Activated B cell treated with CpG ODN at 0.5 μM for 24 hours (primary cell): ENCODE measurements at regions of chr16 and their contacts with region 1.

Region 1: DNA sequence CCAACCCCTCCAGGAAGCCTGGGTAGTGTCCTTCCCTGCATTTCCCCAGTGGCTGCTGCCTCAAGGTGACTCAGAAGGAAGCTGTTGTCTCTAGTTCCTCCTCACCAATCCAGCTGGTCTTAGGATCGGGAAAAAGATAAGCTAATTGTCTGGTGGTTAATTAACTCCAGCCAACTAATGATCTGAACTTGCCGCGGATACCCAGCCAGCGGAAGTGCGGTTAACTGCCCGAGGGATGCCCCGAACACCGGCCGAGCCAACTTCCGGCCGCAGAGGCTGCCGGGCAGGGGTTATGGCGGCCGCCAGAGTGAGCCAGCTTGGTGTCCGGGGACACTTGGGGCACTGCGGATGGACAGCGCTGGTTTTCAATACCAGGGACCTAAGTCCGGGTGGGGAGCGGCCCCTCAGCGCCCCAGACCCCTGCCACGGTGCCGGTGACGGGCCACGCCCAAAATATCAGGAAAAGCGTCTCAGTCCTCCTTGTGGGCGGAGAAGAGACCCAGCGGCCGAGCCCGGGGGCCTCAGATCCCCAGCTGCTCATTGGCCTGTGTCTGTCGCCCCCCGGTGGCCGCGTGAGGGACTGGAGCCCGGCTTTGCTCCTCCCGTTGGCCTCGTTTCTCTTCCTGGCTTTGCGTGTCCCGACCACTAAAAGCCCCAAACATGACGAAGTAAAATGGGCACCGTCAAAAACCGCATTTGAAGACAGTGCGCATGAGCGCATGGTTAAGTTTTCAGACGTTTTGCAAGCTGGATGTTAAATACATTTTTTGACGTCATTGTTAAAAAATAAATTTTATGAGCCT is 10.2 kb upstream of the PRSS22 start:
- DNase-seq: peak; percentile 92
- ATAC-seq: peak; percentile 96
- H3K4me3 Mint-ChIP-seq: peak overlapping the region; percentile 93
- H3K27ac Mint-ChIP-seq: peak overlapping the region; percentile 92
- H3K4me1 Mint-ChIP-seq: peaks cover 7% of the 10 kb centered on the region
- H3K27me3 Mint-ChIP-seq: peaks cover 11% of the 10 kb centered on the region
- CTCF ChIP-seq: peak; percentile 31

Region 2: DNA sequence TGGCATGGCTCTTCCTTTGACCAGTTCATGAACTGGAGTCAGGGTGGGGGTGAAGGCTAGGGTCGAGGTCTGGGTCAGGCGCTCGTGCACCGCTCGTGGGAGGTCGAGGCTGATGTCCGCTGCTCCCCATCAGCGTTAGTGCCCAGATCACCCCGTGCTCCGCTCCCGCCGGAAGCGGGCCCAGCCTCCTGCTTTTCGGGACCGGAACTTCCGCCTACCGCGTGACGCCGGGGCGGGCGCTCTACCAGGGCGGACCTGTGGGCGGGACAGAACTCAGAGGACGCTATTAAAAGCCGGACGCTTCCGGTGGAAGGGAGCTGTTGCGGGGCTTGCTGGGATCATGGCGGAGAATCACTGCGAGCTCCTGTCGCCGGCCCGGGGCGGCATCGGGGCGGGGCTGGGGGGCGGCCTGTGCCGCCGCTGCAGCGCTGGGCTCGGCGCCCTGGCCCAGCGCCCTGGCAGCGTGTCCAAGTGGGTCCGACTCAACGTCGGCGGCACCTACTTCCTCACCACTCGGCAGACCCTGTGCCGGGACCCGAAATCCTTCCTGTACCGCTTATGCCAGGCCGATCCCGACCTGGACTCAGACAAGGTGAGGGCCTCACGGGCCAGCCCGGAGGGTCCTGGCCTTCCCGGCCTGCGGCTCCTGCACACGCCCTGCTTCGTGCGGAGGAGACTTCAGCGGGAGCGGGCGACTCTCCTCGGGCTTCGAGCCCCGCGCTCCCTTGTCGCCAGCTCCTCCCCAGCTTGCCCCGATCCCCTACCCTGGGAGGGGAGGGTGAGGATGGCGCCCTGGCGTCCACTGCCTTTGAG is 185.8 kb before region 1 on chr16 and contains the start of gene KCTD5:
- CTCF ChIA-PET with region 1: interaction called, 3 read pairs
- POLR2A ChIA-PET with region 1: interaction called, 11 read pairs
- intact Hi-C with region 1: no loop called
- DNase-seq: peak; percentile 93
- ATAC-seq: peak; percentile 85
- H3K4me3 Mint-ChIP-seq: peak within 1 kb of the TSS; percentile 96
- H3K27ac Mint-ChIP-seq: peak within 1 kb of the TSS; percentile 92
- H3K4me1 Mint-ChIP-seq: peaks cover 31% of the 10 kb centered on the region
- H3K27me3 Mint-ChIP-seq: no peaks in the 10 kb centered on the region
- CTCF ChIP-seq: no peak
- total RNA-seq, gene KCTD5: 30.3 and 31.4 TPM in 2 replicates

Region 3: GRCh38 chr16:2838928-2839327 is 29.3 kb before region 1 on chr16:
- CTCF ChIA-PET with region 1: interaction called, 7 read pairs
- POLR2A ChIA-PET with region 1: no interaction called
- intact Hi-C with region 1: loop called (anchors 1 kb)
- DNase-seq: no peak
- ATAC-seq: peak; percentile 54
- H3K4me3 Mint-ChIP-seq: no peak overlapping the region
- H3K27ac Mint-ChIP-seq: no peak overlapping the region
- H3K4me1 Mint-ChIP-seq: peaks cover 15% of the 10 kb centered on the region
- H3K27me3 Mint-ChIP-seq: peaks cover 28% of the 10 kb centered on the region
- CTCF ChIP-seq: no peak

Region 4: DNA sequence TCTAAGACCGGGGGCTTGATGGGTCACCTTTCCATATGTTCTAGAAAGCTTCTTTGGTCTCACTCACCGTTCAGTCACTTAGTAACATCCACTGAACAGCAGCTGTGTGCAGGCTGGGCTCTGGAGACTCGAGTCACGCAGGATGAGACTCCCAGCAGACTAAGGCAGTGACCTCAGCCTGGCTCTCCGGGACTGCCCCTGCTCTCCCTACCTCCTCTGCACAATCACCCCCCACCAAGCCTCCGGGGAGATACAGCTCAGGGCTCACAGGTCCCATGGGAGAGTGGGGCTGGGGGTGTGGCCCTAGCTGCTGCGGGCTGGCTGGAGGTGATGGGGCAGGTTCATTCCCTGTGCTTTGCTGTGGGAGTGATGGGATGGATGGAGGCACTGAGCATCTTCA is 28.9 kb after region 1 on chr16:
- CTCF ChIA-PET with region 1: interaction called, 6 read pairs
- POLR2A ChIA-PET with region 1: interaction called, 10 read pairs
- intact Hi-C with region 1: loop called (anchors 1 kb)
- DNase-seq: peak; percentile 82
- ATAC-seq: peak; percentile 100
- H3K4me3 Mint-ChIP-seq: peak overlapping the region; percentile 55
- H3K27ac Mint-ChIP-seq: peak overlapping the region; percentile 69
- H3K4me1 Mint-ChIP-seq: peaks cover 17% of the 10 kb centered on the region
- H3K27me3 Mint-ChIP-seq: no peaks in the 10 kb centered on the region
- CTCF ChIP-seq: no peak

Region 5: DNA sequence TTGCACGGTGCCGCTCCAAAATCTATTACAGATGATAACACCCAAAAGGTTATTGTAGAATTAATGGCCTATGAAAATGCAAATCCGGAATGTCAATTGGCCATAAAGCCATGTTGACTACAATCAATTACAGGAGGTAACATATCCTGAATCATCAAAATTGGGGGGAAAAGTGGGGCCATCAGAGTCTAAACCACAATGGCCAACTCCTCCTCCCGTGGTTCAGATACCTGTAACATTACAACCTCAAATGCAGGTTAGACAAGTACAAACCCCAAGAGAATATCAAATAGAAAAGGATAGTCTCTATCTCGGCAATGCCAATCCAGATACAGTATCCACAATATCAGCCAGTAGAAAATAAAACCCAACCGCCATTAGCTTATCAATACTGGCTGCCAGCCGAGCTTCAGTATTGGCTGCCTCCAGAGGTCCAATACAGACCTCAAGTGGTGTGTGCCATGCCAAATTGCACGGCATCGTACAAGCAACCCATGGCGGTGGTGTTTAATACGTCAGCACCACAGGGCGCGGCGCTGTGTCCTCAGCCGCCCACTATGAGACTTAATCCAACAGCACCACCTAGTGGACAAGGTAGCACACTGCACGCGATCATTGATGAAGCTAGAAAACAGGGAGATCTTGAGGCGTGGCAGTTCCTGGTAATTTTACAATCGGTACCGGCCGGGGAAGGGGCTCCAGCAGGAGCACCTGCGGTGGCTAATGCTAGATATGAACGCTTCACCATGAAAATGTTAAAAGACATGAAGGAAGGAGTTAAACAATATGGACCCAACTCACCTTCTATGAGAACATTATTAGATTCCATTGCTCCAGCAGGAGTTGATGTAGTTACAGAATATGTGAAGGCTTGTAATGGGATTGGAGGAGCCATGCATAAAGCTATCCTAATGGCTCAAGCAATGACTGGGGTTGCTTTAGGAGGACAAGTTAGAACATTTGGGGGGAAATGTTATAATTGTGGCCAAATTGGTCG is 58.8 kb after region 1 on chr16:
- CTCF ChIA-PET with region 1: interaction called, 10 read pairs
- POLR2A ChIA-PET with region 1: no interaction called
- intact Hi-C with region 1: no loop called
- DNase-seq: peak; percentile 67
- ATAC-seq: peak; percentile 100
- H3K4me3 Mint-ChIP-seq: no peak overlapping the region
- H3K27ac Mint-ChIP-seq: no peak overlapping the region
- H3K4me1 Mint-ChIP-seq: peaks cover 10% of the 10 kb centered on the region
- H3K27me3 Mint-ChIP-seq: no peaks in the 10 kb centered on the region
- CTCF ChIP-seq: peak; percentile 56